Activated CD8-positive, alpha-beta T cell treated with anti-CD3 and anti-CD28 coated beads for 36 hours (primary cell): ENCODE measurements at regions of chr2 and their contacts with region 1.

Region 1: DNA sequence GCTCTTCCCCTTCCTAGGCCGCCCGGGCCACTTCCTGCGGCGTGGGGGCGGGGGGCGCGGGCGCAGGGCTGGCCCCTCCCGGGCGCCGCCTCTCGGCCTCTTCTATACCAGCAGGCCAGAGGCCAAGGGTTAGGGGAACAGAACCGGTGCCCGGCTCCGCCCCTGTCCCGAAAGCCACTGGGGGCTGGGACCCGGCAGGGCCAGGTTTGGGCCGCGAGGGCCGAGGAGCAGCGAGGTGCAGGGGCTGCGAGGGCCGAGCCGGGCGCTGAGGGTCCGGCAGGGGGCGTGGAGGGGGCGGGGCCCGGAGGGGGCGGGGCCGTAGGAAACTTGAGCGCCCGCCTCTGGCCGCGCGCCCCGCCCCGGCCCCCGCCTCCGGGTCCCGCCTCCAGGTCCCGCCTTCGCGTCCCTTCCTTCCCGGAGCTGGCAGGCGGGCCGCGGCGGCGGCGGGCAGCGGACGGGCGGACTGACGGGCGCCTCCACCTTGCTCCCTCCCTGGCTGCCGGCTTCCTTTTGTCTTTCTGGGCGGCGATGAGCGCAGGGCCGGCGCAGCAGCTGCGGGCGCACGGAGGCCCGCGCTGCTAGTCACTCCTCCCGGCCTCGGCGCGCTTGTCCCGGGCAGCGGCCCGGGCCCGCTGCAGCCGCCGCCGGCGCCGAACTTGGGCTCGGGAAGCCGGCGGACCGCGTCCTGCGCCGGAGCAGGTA is at the start of gene HPCAL1:
- DNase-seq: peak; percentile 89
- ATAC-seq: peak; percentile 81
- H3K4me3 Mint-ChIP-seq: peak within 1 kb of the TSS; percentile 96
- H3K27ac Mint-ChIP-seq: peak within 1 kb of the TSS; percentile 89
- H3K4me1 Mint-ChIP-seq: peaks cover 68% of the 10 kb centered on the region
- H3K27me3 Mint-ChIP-seq: no peaks in the 10 kb centered on the region
- CTCF ChIP-seq: peak; percentile 73
- total RNA-seq, gene HPCAL1: 166 to 170 TPM

Region 2: DNA sequence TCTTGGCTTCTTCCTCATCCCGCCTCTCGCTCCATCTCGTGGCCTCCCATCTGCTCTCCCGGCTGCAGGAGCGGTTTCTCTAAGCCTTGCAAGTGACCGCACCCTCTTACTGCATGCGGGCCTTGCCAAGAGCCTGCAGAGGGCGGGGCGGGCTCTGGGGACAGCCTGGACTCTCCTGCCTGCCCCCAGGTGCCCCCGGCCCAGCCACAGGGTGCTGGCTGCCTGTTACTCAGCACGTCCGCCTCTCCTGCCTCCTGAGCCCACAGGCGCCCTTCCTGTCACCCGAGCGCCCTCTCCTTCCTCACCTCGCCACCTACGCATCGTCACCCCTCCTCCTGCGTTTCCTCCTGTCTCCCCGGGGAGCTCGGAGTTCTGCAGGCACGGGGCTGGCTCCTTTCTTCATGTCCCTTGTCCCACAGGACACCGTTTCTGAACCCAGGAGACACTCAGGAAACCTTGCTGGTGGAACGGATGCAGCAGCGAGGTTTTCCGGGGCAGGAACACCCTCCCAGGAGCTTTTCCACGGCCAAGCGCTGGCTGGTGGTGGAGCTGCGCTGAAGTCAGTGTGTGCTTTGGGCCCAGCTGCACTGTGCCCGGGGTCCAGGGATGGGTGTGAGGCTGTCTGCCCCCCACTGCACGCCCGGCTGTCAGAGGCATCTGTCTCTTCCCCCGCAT is 28.5 kb after region 1 on chr2:
- CTCF ChIA-PET with region 1: interaction called, 61 read pairs
- POLR2A ChIA-PET with region 1: interaction called, 59 read pairs
- intact Hi-C with region 1: loop called (anchors 1 kb)
- DNase-seq: peak; percentile 92
- ATAC-seq: peak; percentile 55
- H3K4me3 Mint-ChIP-seq: peak overlapping the region; percentile 94
- H3K27ac Mint-ChIP-seq: peak overlapping the region; percentile 91
- H3K4me1 Mint-ChIP-seq: peaks cover 83% of the 10 kb centered on the region
- H3K27me3 Mint-ChIP-seq: no peaks in the 10 kb centered on the region
- CTCF ChIP-seq: no peak

Region 3: GRCh38 chr2:10654069-10654468 is 351.4 kb after region 1 on chr2:
- CTCF ChIA-PET with region 1: no interaction called
- POLR2A ChIA-PET with region 1: no interaction called
- intact Hi-C with region 1: loop called (anchors 5 kb)
- DNase-seq: peak; percentile 86
- ATAC-seq: peak; percentile 96
- H3K4me3 Mint-ChIP-seq: peak overlapping the region; percentile 3
- H3K27ac Mint-ChIP-seq: peak overlapping the region; percentile 76
- H3K4me1 Mint-ChIP-seq: peaks cover 50% of the 10 kb centered on the region
- H3K27me3 Mint-ChIP-seq: no peaks in the 10 kb centered on the region
- CTCF ChIP-seq: no peak